ENCODE measurements at regions of chr2 and their contacts with region 1.

Region 1: GRCh38 chr2:119759451-119760236 is at the start of gene PTPN4:
- DNase-seq: peak; percentile 99
- H3K4me3 ChIP-seq: peak within 1 kb of the TSS; percentile 55 to 98 (median 97)
- H3K27ac ChIP-seq: peak within 1 kb of the TSS; percentile 52
- H3K4me1 ChIP-seq: peaks cover 19% of the 10 kb centered on the region
- H3K27me3 ChIP-seq: no peaks in the 10 kb centered on the region
- CTCF ChIP-seq: no peak
- POLR2A ChIP-seq: peak; percentile 64
- total RNA-seq, gene PTPN4: 26.1 and 29.6 TPM in 2 replicates

Region 2: GRCh38 chr2:119809339-119810048 is 49.9 kb after region 1 on chr2:
- CTCF ChIA-PET with region 1: interaction called, 3 read pairs
- POLR2A ChIA-PET with region 1: no interaction called
- dilution Hi-C with region 1: no loop called
- intact Hi-C with region 1: loop called (anchors 1 kb)
- DNase-seq: peak; percentile 88
- H3K4me3 ChIP-seq: peak overlapping the region in 2 of 3 experiments; percentile 7 to 43
- H3K27ac ChIP-seq: peak overlapping the region; percentile 96
- H3K4me1 ChIP-seq: peaks cover 22% of the 10 kb centered on the region
- H3K27me3 ChIP-seq: no peaks in the 10 kb centered on the region
- CTCF ChIP-seq: no peak
- POLR2A ChIP-seq: no peak

Region 3: DNA sequence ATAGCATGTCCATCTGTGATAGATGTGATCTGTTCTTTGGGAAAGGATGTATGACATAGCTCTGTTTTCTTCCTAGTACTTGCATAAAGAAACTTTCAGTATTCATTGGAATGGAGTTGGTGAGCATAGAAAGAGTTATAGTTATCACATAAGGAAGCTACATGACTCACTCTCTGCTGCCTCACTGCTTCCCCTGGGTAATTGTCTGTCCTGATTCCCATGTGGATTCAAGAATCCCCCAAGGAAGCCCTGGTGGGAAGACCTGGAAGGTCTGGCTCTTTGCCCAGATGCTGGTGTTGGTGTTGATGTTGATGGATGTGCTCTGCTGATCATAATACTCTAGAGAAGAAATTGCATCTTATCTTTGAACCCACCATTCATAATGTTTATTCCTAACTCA is 60.6 kb after region 1 on chr2:
- CTCF ChIA-PET with region 1: interaction called, 186 read pairs
- POLR2A ChIA-PET with region 1: interaction called, 4 read pairs
- dilution Hi-C with region 1: no loop called
- intact Hi-C with region 1: loop called (anchors 1 kb)
- DNase-seq: peak; percentile 97
- H3K4me3 ChIP-seq: no peak overlapping the region
- H3K27ac ChIP-seq: peak overlapping the region; percentile 78
- H3K4me1 ChIP-seq: peaks cover 34% of the 10 kb centered on the region
- H3K27me3 ChIP-seq: no peaks in the 10 kb centered on the region
- CTCF ChIP-seq: no peak
- POLR2A ChIP-seq: peak; percentile 30

Region 4: GRCh38 chr2:119826370-119826961 is 66.8 kb after region 1 on chr2:
- CTCF ChIA-PET with region 1: interaction called, 186 read pairs
- POLR2A ChIA-PET with region 1: no interaction called
- dilution Hi-C with region 1: no loop called
- intact Hi-C with region 1: no loop called
- DNase-seq: peak; percentile 49
- H3K4me3 ChIP-seq: no peak overlapping the region
- H3K27ac ChIP-seq: no peak overlapping the region
- H3K4me1 ChIP-seq: peaks cover 9% of the 10 kb centered on the region
- H3K27me3 ChIP-seq: no peaks in the 10 kb centered on the region
- CTCF ChIP-seq: peak; percentile 68 to 71
- POLR2A ChIP-seq: no peak

Region 5: GRCh38 chr2:120012771-120013596 is 253.3 kb after region 1 on chr2 and contains the start of gene EPB41L5:
- CTCF ChIA-PET with region 1: no interaction called
- POLR2A ChIA-PET with region 1: no interaction called
- dilution Hi-C with region 1: no loop called
- intact Hi-C with region 1: loop called (anchors 2 kb)
- DNase-seq: peak; percentile 90
- H3K4me3 ChIP-seq: peak within 1 kb of the TSS; percentile 35 to 88 (median 46)
- H3K27ac ChIP-seq: peak within 1 kb of the TSS; percentile 30
- H3K4me1 ChIP-seq: peaks cover 24% of the 10 kb centered on the region
- H3K27me3 ChIP-seq: no peaks in the 10 kb centered on the region
- CTCF ChIP-seq: no peak
- POLR2A ChIP-seq: no peak
- total RNA-seq, gene EPB41L5: 13.6 and 15.1 TPM in 2 replicates

Region 6: DNA sequence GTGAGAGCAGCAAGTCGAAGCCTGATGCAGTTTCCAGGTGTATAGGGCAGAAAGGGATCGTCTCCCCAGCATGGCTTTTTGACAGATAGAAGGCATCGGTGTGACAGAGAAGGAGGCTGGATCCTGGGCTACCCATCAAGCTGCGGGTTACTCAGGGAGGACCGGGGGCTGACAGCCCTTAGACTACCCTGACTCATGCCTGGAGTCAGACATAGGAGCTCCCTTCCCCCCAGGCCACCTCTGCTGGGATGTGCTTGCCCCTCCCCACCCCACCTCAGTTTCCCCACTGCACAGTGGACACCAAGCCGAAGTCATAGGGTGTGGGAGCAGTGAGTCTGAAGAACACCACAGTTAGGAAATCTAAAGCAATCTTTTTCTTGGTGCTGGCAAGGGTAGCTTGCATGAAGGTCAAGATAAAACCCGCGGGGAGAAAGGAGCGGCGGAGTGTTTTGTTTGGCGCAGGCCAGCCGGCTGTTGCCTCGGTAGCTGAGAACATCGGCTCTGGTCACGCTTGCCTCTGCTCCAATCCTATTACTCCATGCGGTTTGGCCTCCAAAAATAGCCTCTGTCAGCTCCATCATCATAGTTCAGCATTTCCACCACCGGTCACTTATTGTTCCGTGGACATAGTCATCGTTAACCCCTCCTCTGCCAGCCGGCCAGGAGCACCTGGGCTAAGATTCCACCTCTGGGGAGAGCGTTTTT is 806.8 kb after region 1 on chr2:
- CTCF ChIA-PET with region 1: no interaction called
- POLR2A ChIA-PET with region 1: no interaction called
- dilution Hi-C with region 1: no loop called
- intact Hi-C with region 1: no loop called
- DNase-seq: peak; percentile 54
- H3K4me3 ChIP-seq: no peak overlapping the region
- H3K27ac ChIP-seq: no peak overlapping the region
- H3K4me1 ChIP-seq: no peaks in the 10 kb centered on the region
- H3K27me3 ChIP-seq: peaks cover 0 to 24% of the 10 kb centered on the region in 2 experiments
- CTCF ChIP-seq: no peak
- POLR2A ChIP-seq: no peak

Measured in endothelial cell of umbilical vein (primary cell).